ENCODE measurements at regions of chr12 and their contacts with region 1.

Region 1: GRCh38 chr12:62522984-62523383 is 56.4 kb downstream of the MON2 start:
- DNase-seq: no peak
- H3K4me3 Mint-ChIP-seq: no peak overlapping the region
- H3K27ac Mint-ChIP-seq: no peak overlapping the region
- H3K4me1 Mint-ChIP-seq: peaks cover 36% of the 10 kb centered on the region
- H3K27me3 Mint-ChIP-seq: no peaks in the 10 kb centered on the region

Region 2: DNA sequence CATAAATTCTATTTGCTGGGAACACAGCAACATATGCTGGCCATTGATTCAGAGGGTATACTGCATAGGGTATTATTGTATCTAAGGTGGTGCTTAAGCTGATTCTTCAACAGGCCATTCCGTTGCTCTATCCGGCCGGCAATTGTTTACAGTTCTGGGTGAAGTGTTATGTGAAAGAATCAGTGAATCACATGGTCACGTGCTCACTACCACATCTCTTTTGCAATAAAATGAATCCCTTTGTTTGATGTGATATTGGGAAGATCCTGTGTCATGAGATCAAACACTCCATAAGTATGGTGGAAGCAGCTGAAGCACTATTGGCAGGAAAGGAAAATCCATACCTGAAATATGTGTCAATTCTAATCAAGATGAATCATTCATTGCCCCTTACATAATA is 270.4 kb before region 1 on chr12:
- CTCF ChIA-PET with region 1: no interaction called
- intact Hi-C with region 1: no loop called
- DNase-seq: no peak
- H3K4me3 Mint-ChIP-seq: no peak overlapping the region
- H3K27ac Mint-ChIP-seq: no peak overlapping the region
- H3K4me1 Mint-ChIP-seq: peaks cover 44% of the 10 kb centered on the region
- H3K27me3 Mint-ChIP-seq: no peaks in the 10 kb centered on the region

Region 3: DNA sequence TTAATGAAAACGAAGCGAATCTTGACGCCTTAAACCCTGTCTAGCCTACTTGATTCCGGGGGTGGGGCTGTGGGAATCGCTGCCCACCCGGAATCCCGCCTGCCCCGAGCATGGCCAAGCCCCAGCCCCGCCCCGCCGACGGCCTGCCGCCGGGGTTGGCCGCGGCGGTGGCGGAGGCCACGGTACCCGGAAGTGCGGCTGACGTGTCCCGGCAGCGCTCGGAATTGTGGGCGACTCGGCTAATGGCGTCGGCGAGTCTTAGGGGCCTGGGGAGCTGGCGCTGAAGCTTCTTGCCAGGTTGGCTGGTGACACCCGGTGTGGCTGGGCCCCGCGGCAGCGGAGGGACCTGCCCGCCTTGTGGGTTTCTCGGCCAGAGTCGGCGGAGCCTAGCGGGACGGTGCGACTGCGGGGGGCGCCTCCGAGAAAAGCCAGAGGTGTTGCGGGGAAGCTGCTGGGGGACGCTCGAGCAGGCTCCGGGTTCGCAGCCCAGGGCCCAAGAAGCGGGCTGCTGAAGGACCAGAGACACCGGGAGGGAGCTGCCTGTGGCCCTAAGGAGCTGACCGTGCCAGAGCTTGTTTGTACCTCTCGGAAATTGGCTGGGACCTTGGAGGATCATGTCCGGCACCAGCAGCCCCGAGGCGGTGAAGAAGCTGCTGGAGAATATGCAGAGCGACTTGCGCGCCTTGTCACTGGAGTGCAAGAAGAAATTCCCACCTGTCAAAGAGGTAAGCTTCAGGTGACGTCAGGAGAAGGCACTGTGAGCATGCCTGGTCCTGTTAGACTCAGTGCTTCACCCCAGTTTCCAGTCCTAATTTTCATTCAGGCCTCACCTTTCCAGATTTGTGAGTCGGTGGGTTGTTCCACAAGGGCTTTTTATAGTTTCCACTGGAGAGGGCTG is 56.1 kb before region 1 on chr12 and contains the start of gene MON2:
- CTCF ChIA-PET with region 1: no interaction called
- intact Hi-C with region 1: loop called (anchors 2 kb)
- DNase-seq: peak; percentile 87
- H3K4me3 Mint-ChIP-seq: peak within 1 kb of the TSS; percentile 74
- H3K27ac Mint-ChIP-seq: peak within 1 kb of the TSS; percentile 88
- H3K4me1 Mint-ChIP-seq: peaks cover 15% of the 10 kb centered on the region
- H3K27me3 Mint-ChIP-seq: no peaks in the 10 kb centered on the region
- total RNA-seq, gene MON2: 29.2 to 29.8 TPM

Region 4: DNA sequence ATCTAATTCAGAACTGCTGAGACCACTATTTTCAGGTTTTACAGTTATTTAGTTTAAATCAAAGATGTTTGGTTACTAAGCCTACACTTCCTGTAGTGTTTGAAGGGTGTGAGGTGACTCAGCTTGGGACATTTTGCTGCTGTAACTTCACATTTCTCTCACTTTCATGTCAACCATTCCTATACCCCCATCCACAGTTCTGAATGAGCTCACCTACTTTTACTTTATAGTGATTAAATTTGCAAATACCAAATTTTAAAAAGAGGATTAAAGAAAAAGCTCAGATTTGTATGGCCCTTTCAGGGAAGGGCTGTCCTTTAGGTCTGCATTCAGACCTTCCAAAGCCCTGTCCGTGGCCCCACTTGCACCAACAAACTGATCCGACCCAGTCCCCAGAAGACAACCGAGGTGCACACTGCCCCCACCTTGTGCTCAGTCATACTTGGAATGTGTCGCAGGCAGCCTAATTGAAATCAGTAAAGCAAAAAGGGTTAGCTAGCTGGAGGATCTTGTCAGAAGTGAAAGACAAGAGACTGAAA is 118.0 kb after region 1 on chr12:
- CTCF ChIA-PET with region 1: interaction called, 3 read pairs
- intact Hi-C with region 1: loop called (anchors 1 kb)
- DNase-seq: peak; percentile 71
- H3K4me3 Mint-ChIP-seq: peak overlapping the region; percentile 48
- H3K27ac Mint-ChIP-seq: peak overlapping the region; percentile 67
- H3K4me1 Mint-ChIP-seq: peaks cover 18% of the 10 kb centered on the region
- H3K27me3 Mint-ChIP-seq: peaks cover under 1% of the 10 kb centered on the region

Region 5: DNA sequence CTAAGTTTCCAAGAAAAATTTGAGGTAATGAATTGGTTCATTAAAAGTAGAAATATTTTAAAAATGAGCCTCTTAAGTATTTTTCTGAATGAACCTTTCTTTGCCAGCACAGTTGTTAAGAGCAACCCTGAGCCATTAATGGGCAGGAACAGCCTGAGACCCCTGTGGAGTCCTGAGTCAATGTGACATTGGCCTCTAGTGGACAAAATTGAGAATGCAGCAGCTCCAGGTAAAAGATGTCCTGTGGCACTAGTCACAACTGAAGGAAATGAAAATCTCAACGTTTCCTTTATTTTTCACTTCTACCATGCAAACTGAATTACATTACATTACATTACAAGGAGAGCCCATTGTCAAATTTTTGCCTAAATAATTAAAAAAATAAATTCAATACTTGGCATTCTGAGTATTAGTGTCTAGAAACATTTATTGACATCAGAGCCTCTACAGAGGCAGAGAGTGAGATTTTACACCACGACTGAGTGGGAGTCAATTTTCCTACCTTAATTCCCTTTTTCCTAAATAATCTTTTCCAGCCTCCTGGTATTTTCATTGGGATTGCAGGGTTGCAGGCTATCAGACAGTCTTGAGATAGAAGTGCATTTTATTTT is 276.2 kb after region 1 on chr12:
- CTCF ChIA-PET with region 1: interaction called, 6 read pairs
- intact Hi-C with region 1: loop called (anchors 1 kb)
- DNase-seq: peak; percentile 71
- H3K4me3 Mint-ChIP-seq: no peak overlapping the region
- H3K27ac Mint-ChIP-seq: no peak overlapping the region
- H3K4me1 Mint-ChIP-seq: no peaks in the 10 kb centered on the region
- H3K27me3 Mint-ChIP-seq: no peaks in the 10 kb centered on the region